AG04450 (cell line): ENCODE measurements at regions of chr2 and their contacts with region 1.

Region 1: GRCh38 chr2:72862239-72862988 is 24.8 kb upstream of the SPR start:
- DNase-seq: peak; percentile 75
- H3K4me3 ChIP-seq: peak overlapping the region; percentile 50
- H3K27ac ChIP-seq: no peak overlapping the region
- H3K27me3 ChIP-seq: peaks cover 10% of the 10 kb centered on the region
- CTCF ChIP-seq: peak; percentile 100

Region 2: DNA sequence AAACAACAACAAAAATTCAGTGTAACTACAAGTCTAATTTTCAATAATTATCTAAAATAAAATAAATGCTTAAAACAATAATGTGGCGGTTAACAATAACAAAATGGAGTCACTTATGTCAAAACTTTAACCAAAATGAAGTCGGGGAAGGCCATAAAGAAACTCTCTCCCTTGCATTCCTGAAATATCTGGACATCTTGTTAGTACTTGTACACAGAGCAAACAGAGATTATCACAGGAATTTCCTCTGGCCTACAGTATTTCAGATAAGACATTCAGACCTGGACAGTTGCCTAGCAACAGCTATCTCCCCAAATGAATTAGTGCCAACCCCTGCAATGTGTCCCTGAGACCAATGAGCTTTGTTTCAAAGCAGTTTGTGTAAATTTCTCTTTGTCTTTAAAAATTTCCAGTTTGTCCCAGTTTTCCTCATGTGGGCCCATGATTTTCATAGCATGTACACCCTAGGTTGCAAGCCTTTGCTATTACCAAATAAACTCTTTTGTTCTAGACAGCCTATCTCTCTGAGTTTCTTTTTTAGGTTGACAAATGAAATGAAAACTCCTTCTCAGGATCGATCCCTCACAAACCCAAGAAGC is 105.1 kb before region 1 on chr2:
- CTCF ChIA-PET with region 1: interaction called, 19 read pairs
- POLR2A ChIA-PET with region 1: no interaction called
- DNase-seq: no peak
- H3K4me3 ChIP-seq: no peak overlapping the region
- H3K27ac ChIP-seq: no peak overlapping the region
- H3K27me3 ChIP-seq: no peaks in the 10 kb centered on the region
- CTCF ChIP-seq: no peak

Region 3: DNA sequence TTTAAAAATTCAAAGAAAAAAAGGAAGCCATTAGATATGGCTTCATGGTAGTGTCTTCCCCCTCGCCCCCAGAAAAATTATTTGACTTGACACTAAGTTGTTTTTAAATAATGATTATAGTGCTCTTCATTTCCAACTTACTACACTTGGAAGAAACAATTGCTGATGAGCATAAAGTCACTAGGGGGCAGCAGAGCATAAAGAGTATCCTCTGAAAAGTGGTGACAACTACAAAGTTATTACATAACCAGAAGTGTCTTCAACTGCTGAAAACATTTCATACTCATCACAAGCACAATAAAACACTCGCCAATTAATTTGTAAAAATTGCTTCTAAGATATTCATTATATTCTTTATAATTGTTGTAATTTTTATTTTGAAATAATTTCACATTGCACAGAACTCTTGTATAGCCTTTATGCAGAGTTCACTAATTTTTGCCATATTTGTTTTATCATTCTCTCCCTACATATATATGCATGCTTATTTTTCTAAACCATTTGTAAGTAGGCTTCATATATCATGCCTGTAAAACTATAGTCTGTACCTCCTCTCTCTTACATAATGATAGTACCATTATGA is 91.4 kb before region 1 on chr2:
- CTCF ChIA-PET with region 1: interaction called, 147 read pairs
- POLR2A ChIA-PET with region 1: interaction called, 6 read pairs
- DNase-seq: peak; percentile 48
- H3K4me3 ChIP-seq: no peak overlapping the region
- H3K27ac ChIP-seq: no peak overlapping the region
- H3K27me3 ChIP-seq: no peaks in the 10 kb centered on the region
- CTCF ChIP-seq: peak; percentile 83

Region 4: DNA sequence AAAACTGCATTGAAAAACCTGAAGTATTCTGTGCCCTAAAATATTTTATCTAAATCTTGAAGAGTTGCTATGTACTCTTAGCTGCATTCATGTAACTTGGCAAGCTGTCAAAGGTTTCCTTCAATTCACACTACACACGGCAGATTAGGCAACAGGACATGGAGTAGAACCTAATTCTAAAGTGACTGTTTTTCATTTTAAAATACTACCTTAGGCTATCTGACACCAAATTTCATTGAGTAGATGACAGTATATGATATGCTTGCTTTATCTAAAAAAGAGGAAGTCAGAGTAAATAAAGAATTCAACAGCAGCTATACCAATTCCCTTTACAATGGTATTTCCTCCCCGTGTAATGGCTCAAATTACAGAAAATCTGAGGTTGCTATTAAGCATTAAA is 81.9 kb before region 1 on chr2:
- CTCF ChIA-PET with region 1: interaction called, 59 read pairs
- POLR2A ChIA-PET with region 1: no interaction called
- DNase-seq: no peak
- H3K4me3 ChIP-seq: no peak overlapping the region
- H3K27ac ChIP-seq: no peak overlapping the region
- H3K27me3 ChIP-seq: no peaks in the 10 kb centered on the region
- CTCF ChIP-seq: no peak

Region 5: GRCh38 chr2:72788756-72789155 is 73.7 kb before region 1 on chr2:
- CTCF ChIA-PET with region 1: interaction called, 12 read pairs
- POLR2A ChIA-PET with region 1: interaction called, 3 read pairs
- DNase-seq: no peak
- H3K4me3 ChIP-seq: no peak overlapping the region
- H3K27ac ChIP-seq: no peak overlapping the region
- H3K27me3 ChIP-seq: no peaks in the 10 kb centered on the region
- CTCF ChIP-seq: no peak

Region 6: GRCh38 chr2:72815655-72816268 is 46.7 kb before region 1 on chr2:
- CTCF ChIA-PET with region 1: interaction called, 11 read pairs
- POLR2A ChIA-PET with region 1: no interaction called
- DNase-seq: no peak
- H3K4me3 ChIP-seq: no peak overlapping the region
- H3K27ac ChIP-seq: no peak overlapping the region
- H3K27me3 ChIP-seq: no peaks in the 10 kb centered on the region
- CTCF ChIP-seq: no peak

Region 7: GRCh38 chr2:72837171-72837570 is 25.2 kb before region 1 on chr2:
- CTCF ChIA-PET with region 1: interaction called, 20 read pairs
- POLR2A ChIA-PET with region 1: no interaction called
- DNase-seq: no peak
- H3K4me3 ChIP-seq: no peak overlapping the region
- H3K27ac ChIP-seq: no peak overlapping the region
- H3K27me3 ChIP-seq: peaks cover 7% of the 10 kb centered on the region
- CTCF ChIP-seq: no peak